Posterior vena cava (tissue), 2 donors: ENCODE measurements at regions of chr20 and their contacts with region 1.

Region 1: GRCh38 chr20:37282556-37282955 is 6.9 kb upstream of the MANBAL start:
- DNase-seq: no peak

Region 2: DNA sequence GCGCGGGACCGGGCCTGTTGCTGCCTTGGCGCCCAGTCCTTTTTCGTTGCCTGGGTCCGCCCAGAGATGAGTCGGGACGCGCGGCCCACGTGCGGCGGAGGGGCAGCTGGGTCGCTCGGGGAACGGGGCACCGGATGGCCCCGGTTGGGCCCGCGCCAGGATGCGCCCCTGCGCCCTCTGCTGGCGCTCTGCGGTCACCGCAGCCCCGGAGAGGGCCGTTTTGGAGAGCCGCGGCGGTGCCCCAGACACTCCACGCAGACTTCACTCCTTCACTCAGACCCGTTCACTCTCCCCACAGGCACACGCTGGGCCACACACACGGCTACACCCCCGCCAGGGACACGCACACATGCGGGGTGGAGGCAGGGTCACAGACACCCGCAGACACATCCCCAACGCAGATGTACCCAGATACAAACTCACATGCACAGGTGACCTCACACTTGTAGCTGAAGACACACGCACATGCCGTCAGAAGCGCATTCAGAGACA is 102.2 kb after region 1 on chr20:
- intact Hi-C with region 1: loop called (anchors 5 kb)
- DNase-seq: peak; percentile 91

Region 3: DNA sequence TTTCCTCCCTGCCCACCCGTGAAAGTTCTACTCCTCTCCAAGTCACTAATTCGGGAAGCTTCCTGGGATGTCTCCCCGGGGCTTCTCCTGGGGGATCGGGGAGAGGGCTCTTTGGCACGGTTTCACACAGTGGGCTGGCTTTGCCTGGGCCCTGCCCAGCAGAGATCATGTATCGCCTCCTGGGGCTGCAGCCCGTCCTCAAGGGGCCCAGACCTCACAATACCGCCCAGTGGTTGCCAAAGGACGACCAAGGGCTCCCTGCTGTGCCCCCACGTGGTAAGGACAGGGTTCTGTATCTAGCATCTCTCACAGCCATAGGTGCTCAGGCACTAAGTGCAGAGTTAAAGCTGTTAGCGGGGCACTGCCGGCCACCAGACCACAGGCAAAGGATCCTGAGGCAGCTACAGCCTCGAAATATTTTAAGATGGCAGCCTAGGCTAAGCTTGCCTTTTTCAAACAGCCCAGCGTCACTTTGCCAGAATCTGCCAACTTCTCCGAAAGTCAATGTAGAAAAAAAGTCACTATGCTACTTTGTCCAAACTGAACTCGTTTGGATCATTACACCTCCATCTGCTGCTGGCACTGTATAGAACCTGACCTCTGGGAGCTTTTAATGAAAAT is 237.1 kb after region 1 on chr20:
- intact Hi-C with region 1: loop called in 1 of 2 experiments (anchors 5 kb)
- DNase-seq: no peak